MCF 10A (cell line): ENCODE measurements at regions of chr17 and their contacts with region 1.

Region 1: DNA sequence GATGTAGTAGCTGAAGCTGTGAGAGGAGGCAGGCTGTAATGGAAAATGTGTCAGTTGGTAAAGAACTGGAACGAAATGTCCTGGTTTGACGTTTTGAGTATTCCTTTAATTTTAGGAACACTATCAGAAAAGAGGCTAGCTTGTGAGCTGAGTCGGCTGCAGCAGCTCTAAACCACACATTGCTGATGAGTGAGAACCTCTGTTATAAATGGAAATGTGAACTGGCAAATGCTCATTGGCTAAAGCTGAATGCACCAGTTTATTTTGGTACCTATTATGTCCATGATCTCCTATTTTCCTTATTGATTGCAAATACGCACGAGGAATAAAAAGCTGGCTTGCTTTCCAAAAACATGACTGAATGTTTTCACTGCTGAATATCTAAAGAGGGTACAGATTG is 11.0 kb upstream of the WIPI1 start:
- DNase-seq: no peak
- H3K4me3 Mint-ChIP-seq: no peak overlapping the region
- H3K27ac Mint-ChIP-seq: no peak overlapping the region
- H3K4me1 Mint-ChIP-seq: no peaks in the 10 kb centered on the region
- H3K27me3 Mint-ChIP-seq: peaks cover 28% of the 10 kb centered on the region
- CTCF ChIP-seq: no peak

Region 2: DNA sequence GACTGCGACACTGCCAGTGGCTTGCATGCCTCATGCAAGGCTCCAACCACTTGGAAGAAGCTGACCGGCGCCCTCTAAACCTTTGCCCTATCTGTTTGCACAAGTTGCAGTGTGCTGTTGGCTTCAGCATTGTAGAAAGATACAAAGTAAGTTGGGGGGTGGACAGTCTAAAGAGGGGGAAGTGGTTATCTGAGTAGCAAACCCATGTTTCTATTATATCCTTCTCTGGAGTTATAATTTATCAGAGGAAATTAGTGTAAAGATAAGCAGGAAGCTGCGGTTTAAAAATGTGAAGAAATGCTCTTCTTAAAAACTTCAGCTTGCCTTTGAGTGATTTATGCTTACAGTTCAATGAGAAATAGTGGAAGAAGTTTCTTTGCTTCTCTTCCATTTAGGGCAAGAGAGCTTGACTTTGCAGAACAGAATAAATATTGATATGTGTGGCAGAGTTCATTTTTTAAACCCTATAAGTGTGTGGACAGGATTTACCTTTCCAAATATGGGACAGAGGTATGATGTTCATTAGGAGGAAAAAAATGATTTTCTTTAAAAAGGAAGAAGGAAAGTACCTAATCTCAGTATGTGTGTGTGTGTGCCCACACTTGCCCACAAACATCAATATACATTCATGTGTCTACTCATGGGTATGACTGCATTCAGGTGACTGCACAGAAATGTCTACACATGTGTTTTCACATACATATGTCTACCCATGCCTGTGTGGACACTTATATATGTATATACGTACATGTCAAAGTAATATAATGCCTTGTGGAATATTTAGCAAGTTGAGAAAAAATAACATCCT is 212.4 kb before region 1 on chr17:
- CTCF ChIA-PET with region 1: interaction called, 26 read pairs
- POLR2A ChIA-PET with region 1: interaction called, 3 read pairs
- intact Hi-C with region 1: no loop called
- DNase-seq: no peak
- H3K4me3 Mint-ChIP-seq: no peak overlapping the region
- H3K27ac Mint-ChIP-seq: no peak overlapping the region
- H3K4me1 Mint-ChIP-seq: no peaks in the 10 kb centered on the region
- H3K27me3 Mint-ChIP-seq: no peaks in the 10 kb centered on the region
- CTCF ChIP-seq: no peak

Region 3: DNA sequence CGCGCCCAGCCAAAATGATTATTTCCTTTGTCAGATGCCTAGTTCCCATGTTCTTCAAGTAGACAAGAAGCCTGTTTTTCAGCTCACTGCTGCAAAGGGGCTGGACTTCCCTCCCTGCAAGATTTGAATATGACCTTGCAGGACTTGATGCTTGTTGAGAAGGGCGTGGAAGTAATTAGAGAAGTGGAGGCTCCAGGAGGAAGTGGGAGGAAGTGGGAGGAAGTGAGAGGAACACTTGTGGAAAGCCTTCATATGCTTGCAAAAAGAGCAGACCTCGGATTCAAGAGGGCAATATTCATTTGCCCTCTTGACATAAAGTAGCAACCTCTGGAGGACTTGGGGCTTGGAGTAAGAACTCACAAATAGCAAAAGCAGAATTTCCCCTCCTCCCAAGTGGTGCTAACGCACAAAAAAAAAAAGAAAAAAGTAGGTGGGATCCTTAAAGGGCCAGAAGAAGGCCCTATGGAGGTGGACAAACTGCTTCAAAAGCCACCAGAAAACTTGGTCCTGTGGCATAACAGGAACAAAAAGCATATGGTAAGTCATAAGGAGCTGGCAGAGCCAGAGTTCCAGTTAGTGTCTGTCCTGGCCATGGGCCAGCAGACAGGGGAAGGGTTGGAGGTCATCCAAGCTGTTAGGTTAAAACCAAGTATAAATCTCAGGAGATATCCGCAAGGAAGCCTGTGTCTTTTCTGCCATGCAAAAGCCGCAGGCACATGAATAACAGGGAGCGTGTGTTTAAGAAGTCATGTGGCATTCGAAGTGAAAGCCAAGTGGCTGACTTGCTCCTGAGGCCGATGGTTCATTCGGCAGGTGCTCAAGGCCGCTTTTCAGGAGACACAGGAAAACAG is 23.3 kb after region 1 on chr17:
- CTCF ChIA-PET with region 1: interaction called, 10 read pairs
- POLR2A ChIA-PET with region 1: interaction called, 4 read pairs
- intact Hi-C with region 1: no loop called
- DNase-seq: peak; percentile 87
- H3K4me3 Mint-ChIP-seq: peak overlapping the region; percentile 29
- H3K27ac Mint-ChIP-seq: no peak overlapping the region
- H3K4me1 Mint-ChIP-seq: peaks cover 14% of the 10 kb centered on the region
- H3K27me3 Mint-ChIP-seq: peaks cover 4% of the 10 kb centered on the region
- CTCF ChIP-seq: no peak